ENCODE measurements at regions of chr9 and their contacts with region 1.

Region 1: DNA sequence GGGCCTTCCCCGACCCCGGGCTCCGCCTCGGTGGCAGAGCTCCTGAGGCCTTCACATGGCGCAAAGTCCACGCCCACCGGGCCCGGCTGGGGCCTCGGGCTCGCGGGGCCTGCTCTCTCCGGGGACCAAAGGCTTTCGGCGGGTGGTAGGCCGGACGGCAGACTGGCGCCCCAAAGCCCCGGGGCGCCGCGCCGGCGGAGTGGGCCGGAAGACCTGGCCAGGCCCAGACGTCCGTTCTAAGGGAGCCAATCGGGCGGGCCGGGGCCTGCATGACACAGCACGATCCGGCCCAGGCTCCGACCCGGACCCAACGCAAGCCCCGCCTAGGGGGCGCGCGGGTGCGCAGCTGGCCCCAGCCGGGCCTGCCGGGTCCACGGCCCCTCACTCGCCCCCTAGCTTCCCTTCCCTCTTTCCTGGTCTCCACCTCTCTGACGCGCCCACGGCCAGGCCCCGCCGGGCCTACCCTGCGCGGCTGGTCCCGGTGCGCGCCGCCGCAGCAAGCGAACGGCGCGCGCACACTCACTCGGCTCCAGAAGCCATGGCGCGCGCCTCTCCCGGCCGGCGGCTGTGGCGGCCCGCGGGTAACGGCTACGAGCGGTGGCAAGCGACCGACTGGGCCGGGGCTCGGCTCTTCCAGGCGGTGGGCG is 488 bp downstream of the VCP start:
- DNase-seq: peak; percentile 67 to 82 (median 76)
- H3K4me3 ChIP-seq: peak overlapping the region; percentile 82
- H3K4me3 Mint-ChIP-seq: peak overlapping the region; percentile 85 to 95 (median 90)
- H3K27ac ChIP-seq: peak overlapping the region; percentile 93
- H3K27ac Mint-ChIP-seq: peak overlapping the region; percentile 85 to 99 (median 96)
- H3K4me1 ChIP-seq: peaks cover 39% of the 10 kb centered on the region
- H3K4me1 Mint-ChIP-seq: peaks cover 50 to 58% (median 57%) of the 10 kb centered on the region in 3 donors
- H3K27me3 ChIP-seq: no peaks in the 10 kb centered on the region
- H3K27me3 Mint-ChIP-seq: no peaks in the 10 kb centered on the region

Region 2: GRCh38 chr9:35051069-35051967 is 20.6 kb before region 1 on chr9:
- CTCF ChIA-PET with region 1: interaction called, 10 read pairs
- POLR2A ChIA-PET with region 1: no interaction called
- DNase-seq: peak in 3 of 5 donors; percentile 15 to 33 (median 27)
- H3K4me3 ChIP-seq: no peak overlapping the region
- H3K4me3 Mint-ChIP-seq: no peak overlapping the region
- H3K27ac ChIP-seq: no peak overlapping the region
- H3K27ac Mint-ChIP-seq: peak overlapping the region in 3 of 8 donors; percentile 47 to 84 (median 64)
- H3K4me1 ChIP-seq: no peaks in the 10 kb centered on the region
- H3K4me1 Mint-ChIP-seq: peaks cover 4 to 18% (median 5%) of the 10 kb centered on the region in 3 donors
- H3K27me3 ChIP-seq: no peaks in the 10 kb centered on the region
- H3K27me3 Mint-ChIP-seq: no peaks in the 10 kb centered on the region

Measured in CD8-positive, alpha-beta memory T cell (primary cell).